Activated B cell treated with CpG ODN at 0.5 μM for 24 hours (primary cell): ENCODE measurements at regions of chr1 and their contacts with region 1.

Region 1: DNA sequence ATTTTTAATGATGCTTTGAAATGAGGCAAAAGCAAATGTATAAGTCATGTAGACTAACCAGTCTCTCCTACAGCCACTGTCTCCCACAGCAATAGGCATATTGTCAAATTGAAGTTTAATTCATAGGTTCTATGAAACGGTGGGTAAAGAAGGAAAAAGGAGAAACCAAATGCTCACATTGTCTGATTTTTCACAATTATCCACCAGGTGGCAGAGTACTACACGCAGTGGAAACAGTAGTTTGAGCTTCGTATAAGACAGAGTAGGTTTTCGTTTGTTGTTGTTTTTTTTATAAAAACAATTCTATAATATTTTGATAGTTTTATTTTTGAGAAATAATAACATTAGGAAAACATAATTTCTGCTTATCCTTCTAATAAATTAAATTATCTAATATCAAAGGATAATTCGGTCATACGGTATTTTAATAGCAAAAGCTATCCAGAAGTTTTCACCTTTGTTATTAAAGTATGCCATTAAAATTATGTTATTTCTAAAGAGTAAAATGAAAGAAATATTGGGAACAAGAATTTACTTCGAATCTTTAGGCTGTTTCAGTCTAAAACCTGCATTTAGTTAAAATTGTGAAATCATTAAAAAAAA is 39.1 kb downstream of the TYW3 start:
- DNase-seq: no peak
- ATAC-seq: no peak
- H3K4me3 Mint-ChIP-seq: no peak overlapping the region
- H3K27ac Mint-ChIP-seq: no peak overlapping the region
- H3K4me1 Mint-ChIP-seq: no peaks in the 10 kb centered on the region
- H3K27me3 Mint-ChIP-seq: no peaks in the 10 kb centered on the region
- CTCF ChIP-seq: peak; percentile 95

Region 2: GRCh38 chr1:75203415-75204277 is 431.6 kb after region 1 on chr1:
- CTCF ChIA-PET with region 1: interaction called, 21 read pairs
- POLR2A ChIA-PET with region 1: no interaction called
- intact Hi-C with region 1: no loop called
- DNase-seq: no peak
- ATAC-seq: no peak
- H3K4me3 Mint-ChIP-seq: no peak overlapping the region
- H3K27ac Mint-ChIP-seq: no peak overlapping the region
- H3K4me1 Mint-ChIP-seq: no peaks in the 10 kb centered on the region
- H3K27me3 Mint-ChIP-seq: peaks cover 4% of the 10 kb centered on the region
- CTCF ChIP-seq: no peak

Region 3: GRCh38 chr1:75632350-75632949 is 860.4 kb after region 1 on chr1:
- CTCF ChIA-PET with region 1: no interaction called
- POLR2A ChIA-PET with region 1: no interaction called
- intact Hi-C with region 1: loop called (anchors 1 kb)
- DNase-seq: no peak
- ATAC-seq: no peak
- H3K4me3 Mint-ChIP-seq: no peak overlapping the region
- H3K27ac Mint-ChIP-seq: no peak overlapping the region
- H3K4me1 Mint-ChIP-seq: no peaks in the 10 kb centered on the region
- H3K27me3 Mint-ChIP-seq: peaks cover 9% of the 10 kb centered on the region
- CTCF ChIP-seq: no peak